ENCODE measurements at regions of chr16 and their contacts with region 1.

Region 1: GRCh38 chr16:5235119-5235518 is 137.5 kb upstream of the EEF2KMT start:
- DNase-seq: no peak
- H3K4me3 ChIP-seq: no peak overlapping the region
- H3K27ac ChIP-seq: no peak overlapping the region
- H3K4me1 ChIP-seq: peaks cover 4 to 5% (median 4%) of the 10 kb centered on the region in 4 donors
- H3K27me3 ChIP-seq: peaks cover 0 to 41% (median 2%) of the 10 kb centered on the region in 4 donors
- CTCF ChIP-seq: no peak
- EP300 ChIP-seq: no peak
- POLR2A ChIP-seq: no peak

Region 2: DNA sequence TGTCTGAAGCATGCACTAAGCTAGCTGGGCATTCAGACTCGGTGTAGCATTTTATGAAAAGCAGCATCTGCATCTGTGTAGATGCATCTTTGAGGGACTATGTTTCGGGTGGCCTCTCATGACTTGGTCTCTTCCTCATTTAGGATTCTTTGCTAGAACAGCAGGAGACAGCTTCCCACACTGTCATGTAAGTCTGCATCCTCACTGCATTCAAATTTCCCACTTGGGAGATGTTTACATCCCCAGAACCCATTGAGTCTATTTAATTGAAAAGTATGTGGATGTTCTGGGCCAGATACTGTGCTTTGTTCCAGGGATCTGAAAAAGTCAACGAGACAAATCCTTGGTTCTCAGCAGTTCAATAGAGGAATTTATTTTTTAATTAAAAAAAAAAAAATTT is 61.1 kb after region 1 on chr16:
- intact Hi-C with region 1: no loop called
- DNase-seq: peak; percentile 77
- H3K4me3 ChIP-seq: no peak overlapping the region
- H3K27ac ChIP-seq: no peak overlapping the region
- H3K4me1 ChIP-seq: no peaks in the 10 kb centered on the region
- H3K27me3 ChIP-seq: no peaks in the 10 kb centered on the region
- CTCF ChIP-seq: no peak
- EP300 ChIP-seq: no peak
- POLR2A ChIP-seq: no peak

Region 3: DNA sequence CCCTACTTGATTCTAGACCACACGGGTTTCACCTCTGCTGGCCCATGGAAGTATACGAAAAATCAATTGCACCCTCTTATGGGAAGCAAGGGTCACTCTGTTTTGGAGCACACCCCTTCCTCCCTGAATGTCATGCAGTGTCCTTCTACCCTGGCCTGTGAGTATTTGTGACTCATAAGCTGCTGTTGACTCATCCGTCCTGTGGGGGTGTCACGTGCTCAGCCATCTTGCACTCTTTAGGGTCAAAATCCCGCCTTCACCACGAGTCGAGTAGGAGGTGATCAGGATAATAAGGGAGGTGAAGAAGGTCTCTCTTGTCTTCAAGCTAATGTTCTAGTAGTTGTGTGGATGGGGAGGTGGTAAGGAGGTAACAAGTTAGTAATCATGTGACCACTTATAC is 203.5 kb after region 1 on chr16:
- intact Hi-C with region 1: no loop called
- DNase-seq: no peak
- H3K4me3 ChIP-seq: no peak overlapping the region
- H3K27ac ChIP-seq: no peak overlapping the region
- H3K4me1 ChIP-seq: no peaks in the 10 kb centered on the region
- H3K27me3 ChIP-seq: no peaks in the 10 kb centered on the region
- CTCF ChIP-seq: no peak
- EP300 ChIP-seq: no peak
- POLR2A ChIP-seq: no peak

Region 4: GRCh38 chr16:6643080-6643686 is 1408.1 kb after region 1 on chr16:
- intact Hi-C with region 1: loop called (anchors 5 kb)
- DNase-seq: no peak
- H3K4me3 ChIP-seq: no peak overlapping the region
- H3K27ac ChIP-seq: no peak overlapping the region
- H3K4me1 ChIP-seq: no peaks in the 10 kb centered on the region
- H3K27me3 ChIP-seq: peaks cover 0 to 63% (median 0%) of the 10 kb centered on the region in 4 donors
- CTCF ChIP-seq: peak; percentile 73 to 82 (median 80)
- EP300 ChIP-seq: no peak
- POLR2A ChIP-seq: no peak

Measured in esophagus muscularis mucosa (tissue), 4 donors.